GM12878 (cell line): ENCODE measurements at regions of chr22 and their contacts with region 1.

Region 1: DNA sequence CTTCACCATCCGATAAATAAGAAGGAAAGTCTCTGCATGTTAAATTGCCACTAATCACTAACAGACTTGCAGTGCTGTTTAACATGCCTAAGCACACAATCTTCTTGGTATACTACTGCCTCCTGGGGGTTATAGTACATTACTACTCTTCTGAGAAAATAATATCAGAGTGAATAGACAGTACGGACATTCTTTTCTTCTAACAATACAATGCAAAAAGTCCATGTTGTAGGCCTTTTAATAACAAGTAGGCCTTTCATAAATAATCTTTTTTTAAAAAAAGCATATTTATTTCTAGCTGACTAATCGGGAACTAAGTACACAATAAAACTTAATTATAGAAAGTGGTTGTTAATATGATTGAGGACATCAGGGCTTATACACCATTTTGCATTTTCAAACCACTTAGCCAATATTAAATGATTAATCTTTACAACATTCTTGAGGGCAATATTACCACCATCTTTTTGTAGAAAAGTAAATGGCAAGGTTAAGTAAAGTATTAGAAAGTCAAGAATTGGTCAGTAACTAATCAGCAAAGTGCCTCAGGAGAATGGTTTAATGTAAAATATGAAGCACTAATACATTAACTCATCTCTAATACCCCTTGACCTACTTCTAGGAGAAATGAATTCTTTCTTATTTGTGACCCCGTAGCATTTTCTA is 84.7 kb downstream of the TTC28 start:
- DNase-seq: no peak
- ATAC-seq: peak; percentile 93
- H3K4me3 ChIP-seq: no peak overlapping the region
- H3K27ac ChIP-seq: no peak overlapping the region
- H3K4me1 ChIP-seq: no peaks in the 10 kb centered on the region
- H3K27me3 ChIP-seq: no peaks in the 10 kb centered on the region
- CTCF ChIP-seq: peak; percentile 50 to 79 (median 67); a peak in 5 of 6 replicates
- EP300 ChIP-seq: no peak
- POLR2A ChIP-seq: no peak
- RAD21 ChIP-seq: peak; percentile 86

Region 2: GRCh38 chr22:28019881-28020871 is 574.8 kb before region 1 on chr22:
- CTCF ChIA-PET with region 1: interaction called, 41 read pairs
- POLR2A ChIA-PET with region 1: no interaction called
- RAD21 ChIA-PET with region 1: interaction called, 17 read pairs
- SMC1A ChIA-PET with region 1: interaction called, 16 read pairs
- in situ Hi-C with region 1: loop called (anchors 5 kb)
- intact Hi-C with region 1: loop called (anchors 1 kb)
- DNase-seq: no peak
- ATAC-seq: peak; percentile 95
- H3K4me3 ChIP-seq: no peak overlapping the region
- H3K27ac ChIP-seq: no peak overlapping the region
- H3K4me1 ChIP-seq: no peaks in the 10 kb centered on the region
- H3K27me3 ChIP-seq: 0 out of 4 replicates have a peak, but pooled peaks cover 0 to 1% of the 10 kb centered on the region in 2 experiments
- CTCF ChIP-seq: peak; percentile 93 to 96 (median 95)
- EP300 ChIP-seq: no peak
- POLR2A ChIP-seq: no peak
- RAD21 ChIP-seq: peak; percentile 84

Region 3: GRCh38 chr22:28442264-28442710 is 152.6 kb before region 1 on chr22:
- CTCF ChIA-PET with region 1: no interaction called
- POLR2A ChIA-PET with region 1: no interaction called
- RAD21 ChIA-PET with region 1: interaction called, 5 read pairs
- SMC1A ChIA-PET with region 1: no interaction called
- in situ Hi-C with region 1: no loop called
- intact Hi-C with region 1: loop called (anchors 1 kb)
- DNase-seq: no peak
- ATAC-seq: peak; percentile 99
- H3K4me3 ChIP-seq: no peak overlapping the region
- H3K27ac ChIP-seq: no peak overlapping the region
- H3K4me1 ChIP-seq: no peaks in the 10 kb centered on the region
- H3K27me3 ChIP-seq: peaks cover 4 to 8% of the 10 kb centered on the region in 2 experiments
- CTCF ChIP-seq: peak; percentile 55 to 66 (median 61)
- EP300 ChIP-seq: no peak
- POLR2A ChIP-seq: no peak
- RAD21 ChIP-seq: peak; percentile 80

Region 4: DNA sequence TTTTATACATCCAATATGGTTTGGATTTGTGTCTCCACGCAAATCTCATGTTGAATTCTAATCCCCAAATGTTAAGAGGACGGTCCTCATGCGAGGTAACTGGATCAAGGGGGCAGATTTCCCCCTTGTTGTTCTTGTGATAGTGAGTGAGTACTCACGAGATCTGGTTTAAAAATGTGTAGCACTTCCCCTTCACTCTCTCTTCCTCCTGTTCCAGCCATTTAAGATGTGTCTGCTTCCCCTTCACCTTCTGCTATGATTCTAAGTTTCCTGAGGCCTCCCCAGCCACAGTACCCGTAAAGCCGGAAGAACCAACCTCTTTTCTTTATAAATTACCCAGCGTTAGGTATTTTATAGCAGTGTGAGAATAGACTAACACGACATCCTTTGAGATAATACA is 13.9 kb before region 1 on chr22:
- CTCF ChIA-PET with region 1: interaction called, 14 read pairs
- POLR2A ChIA-PET with region 1: no interaction called
- RAD21 ChIA-PET with region 1: no interaction called
- SMC1A ChIA-PET with region 1: interaction called, 6 read pairs
- in situ Hi-C with region 1: no loop called
- intact Hi-C with region 1: no loop called
- DNase-seq: no peak
- ATAC-seq: no peak
- H3K4me3 ChIP-seq: no peak overlapping the region
- H3K27ac ChIP-seq: no peak overlapping the region
- H3K4me1 ChIP-seq: no peaks in the 10 kb centered on the region
- H3K27me3 ChIP-seq: peaks cover 0 to 4% of the 10 kb centered on the region in 2 experiments; a peak in 1 of 4 replicates
- CTCF ChIP-seq: no peak
- EP300 ChIP-seq: no peak
- POLR2A ChIP-seq: no peak
- RAD21 ChIP-seq: no peak

Region 5: GRCh38 chr22:28629420-28630176 is 34.7 kb after region 1 on chr22:
- CTCF ChIA-PET with region 1: no interaction called
- POLR2A ChIA-PET with region 1: no interaction called
- RAD21 ChIA-PET with region 1: no interaction called
- SMC1A ChIA-PET with region 1: no interaction called
- in situ Hi-C with region 1: no loop called
- intact Hi-C with region 1: no loop called
- DNase-seq: no peak
- ATAC-seq: no peak
- H3K4me3 ChIP-seq: no peak overlapping the region
- H3K27ac ChIP-seq: no peak overlapping the region
- H3K4me1 ChIP-seq: no peaks in the 10 kb centered on the region
- H3K27me3 ChIP-seq: 0 out of 4 replicates have a peak, but pooled peaks cover 0 to 2% of the 10 kb centered on the region in 2 experiments
- CTCF ChIP-seq: no peak
- EP300 ChIP-seq: no peak
- POLR2A ChIP-seq: no peak
- RAD21 ChIP-seq: no peak